Aorta (tissue), 5 donors: ENCODE measurements at regions of chr6 and their contacts with region 1.

Region 1: GRCh38 chr6:96897383-96898240 is at the start of gene NDUFAF4:
- DNase-seq: peak; percentile 97 to 99
- ATAC-seq: peak; percentile 100
- H3K4me3 ChIP-seq: peak within 1 kb of the TSS; percentile 80 to 88
- H3K27ac ChIP-seq: peak within 1 kb of the TSS; percentile 89 to 90
- H3K4me1 ChIP-seq: no peaks in the 10 kb centered on the region
- H3K27me3 ChIP-seq: no peaks in the 10 kb centered on the region
- total RNA-seq, gene NDUFAF4: 13.4 to 32.0 TPM

Region 2: DNA sequence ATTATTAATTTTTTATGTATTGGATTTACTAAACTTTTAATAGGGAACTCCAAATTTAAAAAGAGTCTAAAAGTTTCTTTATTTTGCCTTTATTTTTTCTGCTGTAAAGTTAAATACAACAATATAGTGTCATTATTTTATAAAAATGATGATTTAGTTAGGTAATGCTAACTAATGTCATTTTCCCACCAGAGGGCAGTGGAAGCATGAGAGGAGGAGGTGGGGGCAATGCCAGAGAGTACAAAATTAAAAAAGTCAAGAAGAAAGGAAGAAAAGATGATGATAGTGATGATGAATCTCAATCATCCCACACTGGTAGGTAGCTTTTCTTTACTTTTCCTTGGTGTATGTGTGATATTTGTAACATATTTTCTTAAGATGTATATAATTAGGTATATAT is 354.9 kb before region 1 on chr6:
- intact Hi-C with region 1: loop called (anchors 5 kb)
- DNase-seq: no peak
- ATAC-seq: peak; percentile 41
- H3K4me3 ChIP-seq: no peak overlapping the region
- H3K27ac ChIP-seq: no peak overlapping the region
- H3K4me1 ChIP-seq: no peaks in the 10 kb centered on the region
- H3K27me3 ChIP-seq: no peaks in the 10 kb centered on the region

Region 3: DNA sequence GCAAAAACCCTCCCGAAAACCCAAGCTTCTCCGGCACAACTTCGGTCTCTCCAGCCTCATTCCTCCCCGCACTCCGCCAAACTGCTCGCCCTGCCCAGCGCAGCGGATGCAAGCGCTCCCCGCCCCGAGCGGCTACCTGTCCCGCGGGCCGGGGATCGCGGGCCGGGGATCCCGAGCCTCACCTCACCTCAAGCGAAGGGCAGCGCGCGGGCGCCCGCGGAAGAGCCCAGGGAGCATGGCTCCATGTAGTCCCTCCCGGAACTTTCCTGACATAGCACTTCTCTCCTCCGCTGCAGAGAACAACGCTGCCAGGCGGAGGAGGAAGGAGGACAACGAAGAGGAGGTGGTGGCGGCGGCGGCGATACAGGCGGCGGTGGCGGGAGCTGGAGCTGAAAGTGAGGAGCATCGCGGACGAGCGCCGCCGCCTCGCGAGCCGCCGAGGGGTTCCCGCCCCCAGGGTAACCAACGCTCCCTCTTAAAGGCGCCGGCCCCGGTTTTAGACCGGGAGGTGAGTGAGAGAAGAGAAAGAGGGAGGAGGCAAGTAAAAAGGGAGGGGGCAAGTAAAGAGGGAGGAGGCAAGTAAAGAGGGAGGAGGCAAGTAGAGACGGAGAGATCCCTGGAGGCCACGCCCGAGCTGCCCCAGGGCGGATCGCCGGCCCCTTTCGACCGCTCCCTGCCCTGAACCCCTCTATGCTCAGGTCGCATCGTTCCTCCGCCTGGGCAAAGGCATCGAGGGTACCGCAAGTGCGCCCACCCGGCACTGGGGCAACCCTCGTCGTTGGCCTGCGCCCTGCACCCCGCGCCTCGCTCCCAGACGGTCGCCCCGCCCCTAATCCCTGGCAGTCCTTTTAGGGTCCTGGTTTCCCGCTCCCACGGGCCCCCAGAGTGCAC is 60.3 kb before region 1 on chr6 and contains the start of gene GPR63:
- intact Hi-C with region 1: loop called (anchors 5 kb)
- DNase-seq: peak; percentile 70 to 92
- ATAC-seq: peak; percentile 92
- H3K4me3 ChIP-seq: peak within 1 kb of the TSS; percentile 83 to 97
- H3K27ac ChIP-seq: peak within 1 kb of the TSS in 1 of 2 donors; percentile 4
- H3K4me1 ChIP-seq: no peaks in the 10 kb centered on the region
- H3K27me3 ChIP-seq: no peaks in the 10 kb centered on the region
- total RNA-seq, gene GPR63: 1.4 to 3.6 TPM

Region 4: GRCh38 chr6:97053643-97054411 is 156.2 kb after region 1 on chr6:
- intact Hi-C with region 1: loop called (anchors 2 kb)
- DNase-seq: no peak
- ATAC-seq: no peak
- H3K4me3 ChIP-seq: no peak overlapping the region
- H3K27ac ChIP-seq: no peak overlapping the region
- H3K4me1 ChIP-seq: no peaks in the 10 kb centered on the region
- H3K27me3 ChIP-seq: no peaks in the 10 kb centered on the region